Endothelial cell of umbilical vein (primary cell): ENCODE measurements at regions of chr17 and their contacts with region 1.

Region 1: DNA sequence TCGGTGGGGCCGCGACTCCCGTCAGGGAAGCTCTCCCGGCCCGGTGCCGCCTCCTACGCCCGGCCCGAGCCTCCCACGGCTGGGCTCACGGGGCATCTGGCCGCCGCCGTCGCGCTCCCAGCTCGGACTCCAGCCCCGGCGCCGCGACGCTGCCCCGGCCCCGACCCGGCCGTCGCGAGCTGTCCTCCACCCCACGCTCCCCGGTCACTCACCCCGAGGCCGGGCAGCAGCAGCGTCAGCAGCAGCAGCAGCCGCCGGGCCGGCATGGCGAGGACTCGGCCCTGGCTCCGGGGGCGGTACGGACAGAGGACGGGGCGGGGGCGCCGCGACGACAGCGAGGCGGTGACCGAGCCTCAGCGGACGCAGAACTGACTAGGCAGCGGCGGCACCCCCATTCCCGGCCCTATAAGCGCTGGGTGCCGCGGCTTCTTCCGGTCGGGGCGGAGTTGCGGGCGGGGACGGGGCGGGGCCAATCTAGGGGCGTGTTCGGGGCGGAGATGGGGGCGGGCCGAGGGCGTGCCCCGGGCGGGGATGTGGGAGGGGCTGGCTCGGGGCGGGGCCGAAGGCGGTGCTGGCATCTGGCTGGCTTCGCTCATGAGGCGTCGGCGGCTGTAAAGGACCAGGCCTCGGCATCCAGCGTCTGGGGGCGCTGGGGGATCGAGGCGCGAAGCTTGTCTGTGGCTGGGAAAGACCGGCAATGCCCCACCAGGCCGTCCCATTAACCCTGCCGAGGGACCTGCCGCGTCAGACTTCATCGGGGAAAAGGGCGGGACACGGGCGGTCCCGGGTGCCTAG is at the start of gene ERN1:
- DNase-seq: peak; percentile 92
- H3K4me3 ChIP-seq: peak within 1 kb of the TSS; percentile 68 to 92 (median 73)
- H3K27ac ChIP-seq: peak within 1 kb of the TSS; percentile 91
- H3K4me1 ChIP-seq: peaks cover 23% of the 10 kb centered on the region
- H3K27me3 ChIP-seq: no peaks in the 10 kb centered on the region
- CTCF ChIP-seq: no peak
- POLR2A ChIP-seq: peak; percentile 97
- total RNA-seq, gene ERN1: 14.7 and 21.5 TPM in 2 replicates

Region 2: DNA sequence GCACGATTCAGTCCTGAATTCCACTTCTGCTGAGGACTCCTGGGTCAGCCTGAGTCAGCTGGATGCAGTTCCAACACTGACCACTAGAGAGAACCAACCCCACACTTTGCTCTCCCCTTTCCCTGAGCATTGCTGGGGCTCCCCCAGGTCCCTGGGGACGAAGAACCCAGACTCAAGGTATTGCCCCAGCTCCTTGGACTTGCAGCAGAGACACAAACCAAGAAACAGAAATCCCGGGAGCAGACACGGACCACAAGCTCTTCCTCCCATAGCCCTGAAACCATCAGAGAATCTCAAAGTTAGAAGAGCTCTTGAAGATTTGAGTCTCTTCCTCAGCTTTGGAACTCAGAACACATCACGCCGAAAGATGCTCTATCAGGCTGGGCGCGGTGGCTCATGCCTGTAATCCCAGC is 210.6 kb before region 1 on chr17:
- CTCF ChIA-PET with region 1: interaction called, 107 read pairs
- POLR2A ChIA-PET with region 1: interaction called, 3 read pairs
- dilution Hi-C with region 1: no loop called
- intact Hi-C with region 1: loop called (anchors 1 kb)
- DNase-seq: peak; percentile 68
- H3K4me3 ChIP-seq: no peak overlapping the region
- H3K27ac ChIP-seq: no peak overlapping the region
- H3K4me1 ChIP-seq: no peaks in the 10 kb centered on the region
- H3K27me3 ChIP-seq: peaks cover 0 to 3% of the 10 kb centered on the region in 2 experiments
- CTCF ChIP-seq: peak; percentile 75 to 89
- POLR2A ChIP-seq: no peak

Region 3: DNA sequence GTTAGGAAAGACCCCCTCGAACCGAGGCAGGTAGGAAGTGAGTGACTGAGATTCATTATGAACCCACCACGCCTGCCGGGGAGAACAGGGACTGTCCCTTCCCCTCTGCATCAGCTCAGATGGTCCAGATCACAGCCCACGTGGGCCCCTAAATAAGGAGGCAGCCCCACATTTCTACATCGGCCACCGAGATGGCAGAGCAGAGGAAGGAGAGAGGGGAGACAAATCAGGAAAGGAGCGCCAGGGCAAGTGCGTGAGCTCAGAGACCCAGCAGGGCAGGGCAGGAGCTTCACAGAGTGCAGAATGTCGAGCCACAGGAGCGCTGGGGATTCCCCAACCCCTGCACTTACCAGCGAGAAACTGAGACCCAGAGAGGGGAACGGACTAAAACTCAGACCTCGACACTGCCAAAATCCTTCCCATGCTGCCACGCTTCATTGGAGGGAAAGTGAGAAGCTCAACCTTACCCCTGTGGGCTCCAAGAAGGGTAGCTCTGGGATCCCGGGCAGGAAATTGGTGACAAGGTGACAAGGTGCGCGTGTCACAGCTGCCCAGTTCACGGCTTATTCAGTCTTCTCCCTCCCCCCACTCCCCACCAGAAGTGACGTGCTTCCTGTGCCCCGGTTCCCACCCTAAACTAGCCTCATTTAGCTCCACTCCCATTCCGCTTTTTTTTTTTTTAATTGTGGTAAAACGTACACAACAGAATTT is 109.8 kb before region 1 on chr17 and contains the start of gene ICAM2:
- CTCF ChIA-PET with region 1: interaction called, 802 read pairs
- POLR2A ChIA-PET with region 1: no interaction called
- dilution Hi-C with region 1: loop called (anchors 25 kb)
- intact Hi-C with region 1: no loop called
- DNase-seq: peak; percentile 71
- H3K4me3 ChIP-seq: peak within 1 kb of the TSS; percentile 49 to 63 (median 54)
- H3K27ac ChIP-seq: peak within 1 kb of the TSS; percentile 94
- H3K4me1 ChIP-seq: peaks cover 67% of the 10 kb centered on the region
- H3K27me3 ChIP-seq: no peaks in the 10 kb centered on the region
- CTCF ChIP-seq: no peak
- POLR2A ChIP-seq: peak; percentile 48
- total RNA-seq, gene ICAM2: 514 and 586 TPM in 2 replicates

Region 4: GRCh38 chr17:64056269-64057005 is 73.5 kb before region 1 on chr17:
- CTCF ChIA-PET with region 1: interaction called, 234 read pairs
- POLR2A ChIA-PET with region 1: interaction called, 8 read pairs
- dilution Hi-C with region 1: no loop called
- intact Hi-C with region 1: no loop called
- DNase-seq: no peak
- H3K4me3 ChIP-seq: no peak overlapping the region
- H3K27ac ChIP-seq: no peak overlapping the region
- H3K4me1 ChIP-seq: peaks cover 17% of the 10 kb centered on the region
- H3K27me3 ChIP-seq: no peaks in the 10 kb centered on the region
- CTCF ChIP-seq: no peak
- POLR2A ChIP-seq: no peak

Region 5: GRCh38 chr17:64115871-64116534 is 14.0 kb before region 1 on chr17:
- CTCF ChIA-PET with region 1: interaction called, 11 read pairs
- POLR2A ChIA-PET with region 1: interaction called, 5 read pairs
- dilution Hi-C with region 1: no loop called
- intact Hi-C with region 1: no loop called
- DNase-seq: no peak
- H3K4me3 ChIP-seq: no peak overlapping the region
- H3K27ac ChIP-seq: no peak overlapping the region
- H3K4me1 ChIP-seq: no peaks in the 10 kb centered on the region
- H3K27me3 ChIP-seq: no peaks in the 10 kb centered on the region
- CTCF ChIP-seq: no peak
- POLR2A ChIP-seq: no peak

Region 6: DNA sequence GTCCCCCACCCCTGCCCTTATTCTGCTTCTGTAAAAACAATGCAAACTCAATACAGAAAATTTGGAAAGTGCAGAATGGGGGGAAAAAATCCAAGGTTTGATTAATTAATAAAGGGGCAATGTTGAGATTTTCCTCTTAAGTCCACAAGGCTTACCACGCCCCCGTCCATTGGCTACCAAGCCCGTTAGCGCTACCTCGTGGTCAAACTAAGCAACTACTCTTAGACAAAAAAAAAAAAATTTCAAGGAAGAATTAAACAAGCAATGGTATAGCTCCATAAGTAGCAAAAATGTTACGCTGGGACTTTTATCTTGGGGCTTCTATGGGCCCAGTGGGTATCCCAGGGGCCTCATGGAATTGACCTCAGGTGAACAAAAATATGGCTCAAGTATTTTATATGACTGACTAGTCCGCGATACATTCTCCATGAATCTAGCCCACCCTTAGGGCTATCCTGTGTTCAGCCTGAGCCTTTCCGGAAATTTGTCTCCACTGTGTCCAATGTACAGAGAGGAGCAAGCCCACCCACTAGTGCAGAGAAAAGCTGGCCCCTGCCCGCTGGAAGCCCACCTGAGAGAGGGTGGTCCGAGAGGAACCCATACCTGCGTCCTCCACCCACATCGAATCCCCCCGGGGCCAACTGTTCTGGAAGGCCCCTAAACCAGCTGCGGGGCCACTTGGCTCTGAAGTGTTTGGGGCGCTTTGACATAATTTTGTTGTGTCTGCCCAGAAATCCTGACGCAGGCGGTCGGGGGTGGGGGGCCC is 152.2 kb after region 1 on chr17:
- CTCF ChIA-PET with region 1: interaction called, 40 read pairs
- POLR2A ChIA-PET with region 1: no interaction called
- dilution Hi-C with region 1: no loop called
- intact Hi-C with region 1: loop called (anchors 1 kb)
- DNase-seq: peak; percentile 87
- H3K4me3 ChIP-seq: no peak overlapping the region
- H3K27ac ChIP-seq: no peak overlapping the region
- H3K4me1 ChIP-seq: peaks cover 17% of the 10 kb centered on the region
- H3K27me3 ChIP-seq: no peaks in the 10 kb centered on the region
- CTCF ChIP-seq: peak; percentile 58 to 61
- POLR2A ChIP-seq: no peak

Region 7: GRCh38 chr17:64787216-64787920 is 657.4 kb after region 1 on chr17:
- CTCF ChIA-PET with region 1: no interaction called
- POLR2A ChIA-PET with region 1: no interaction called
- dilution Hi-C with region 1: no loop called
- intact Hi-C with region 1: no loop called
- DNase-seq: no peak
- H3K4me3 ChIP-seq: no peak overlapping the region
- H3K27ac ChIP-seq: no peak overlapping the region
- H3K4me1 ChIP-seq: no peaks in the 10 kb centered on the region
- H3K27me3 ChIP-seq: no peaks in the 10 kb centered on the region
- CTCF ChIP-seq: no peak
- POLR2A ChIP-seq: no peak